CD8-positive, alpha-beta T cell (primary cell): ENCODE measurements at regions of chr11 and their contacts with region 1.

Region 1: GRCh38 chr11:75422253-75423231 is 10.5 kb downstream of the KLHL35 start:
- DNase-seq: no peak
- ATAC-seq: no peak
- H3K4me3 ChIP-seq: no peak overlapping the region
- H3K4me3 Mint-ChIP-seq: no peak overlapping the region
- H3K27ac ChIP-seq: no peak overlapping the region
- H3K27ac Mint-ChIP-seq: no peak overlapping the region
- H3K4me1 ChIP-seq: no peaks in the 10 kb centered on the region
- H3K4me1 Mint-ChIP-seq: no peaks in the 10 kb centered on the region
- H3K27me3 ChIP-seq: no peaks in the 10 kb centered on the region
- H3K27me3 Mint-ChIP-seq: no peaks in the 10 kb centered on the region
- CTCF ChIP-seq: no peak

Region 2: GRCh38 chr11:75406338-75406777 is 16.2 kb before region 1 on chr11:
- CTCF ChIA-PET with region 1: interaction called, 11 read pairs
- POLR2A ChIA-PET with region 1: no interaction called
- intact Hi-C with region 1: no loop called
- DNase-seq: no peak
- ATAC-seq: no peak
- H3K4me3 ChIP-seq: no peak overlapping the region
- H3K4me3 Mint-ChIP-seq: no peak overlapping the region
- H3K27ac ChIP-seq: no peak overlapping the region
- H3K27ac Mint-ChIP-seq: no peak overlapping the region
- H3K4me1 ChIP-seq: peaks cover 19% of the 10 kb centered on the region
- H3K4me1 Mint-ChIP-seq: peaks cover 52% of the 10 kb centered on the region
- H3K27me3 ChIP-seq: no peaks in the 10 kb centered on the region
- H3K27me3 Mint-ChIP-seq: no peaks in the 10 kb centered on the region
- CTCF ChIP-seq: no peak

Region 3: GRCh38 chr11:76120513-76121101 is 698.1 kb after region 1 on chr11:
- CTCF ChIA-PET with region 1: no interaction called
- POLR2A ChIA-PET with region 1: no interaction called
- intact Hi-C with region 1: no loop called
- DNase-seq: no peak
- ATAC-seq: no peak
- H3K4me3 ChIP-seq: no peak overlapping the region
- H3K4me3 Mint-ChIP-seq: no peak overlapping the region
- H3K27ac ChIP-seq: no peak overlapping the region
- H3K27ac Mint-ChIP-seq: no peak overlapping the region
- H3K4me1 ChIP-seq: no peaks in the 10 kb centered on the region
- H3K4me1 Mint-ChIP-seq: no peaks in the 10 kb centered on the region
- H3K27me3 ChIP-seq: no peaks in the 10 kb centered on the region
- H3K27me3 Mint-ChIP-seq: no peaks in the 10 kb centered on the region
- CTCF ChIP-seq: no peak